OCI-LY7 (cell line): ENCODE measurements at regions of chr7 and their contacts with region 1.

Region 1: GRCh38 chr7:30322271-30323005 is 38.0 kb downstream of the ZNRF2 start:
- DNase-seq: peak; percentile 80
- H3K4me3 ChIP-seq: peak overlapping the region; percentile 63
- H3K27ac ChIP-seq: peak overlapping the region; percentile 78
- H3K4me1 ChIP-seq: peaks cover 40% of the 10 kb centered on the region
- CTCF ChIP-seq: 0 out of 2 replicates have a peak, but pooled peaks have one; percentile 31

Region 2: GRCh38 chr7:30173058-30173897 is 149.2 kb before region 1 on chr7:
- CTCF ChIA-PET with region 1: no interaction called
- POLR2A ChIA-PET with region 1: no interaction called
- intact Hi-C with region 1: no loop called
- DNase-seq: peak; percentile 21
- H3K4me3 ChIP-seq: no peak overlapping the region
- H3K27ac ChIP-seq: no peak overlapping the region
- H3K4me1 ChIP-seq: peaks cover 15% of the 10 kb centered on the region
- CTCF ChIP-seq: peak; percentile 38

Region 3: DNA sequence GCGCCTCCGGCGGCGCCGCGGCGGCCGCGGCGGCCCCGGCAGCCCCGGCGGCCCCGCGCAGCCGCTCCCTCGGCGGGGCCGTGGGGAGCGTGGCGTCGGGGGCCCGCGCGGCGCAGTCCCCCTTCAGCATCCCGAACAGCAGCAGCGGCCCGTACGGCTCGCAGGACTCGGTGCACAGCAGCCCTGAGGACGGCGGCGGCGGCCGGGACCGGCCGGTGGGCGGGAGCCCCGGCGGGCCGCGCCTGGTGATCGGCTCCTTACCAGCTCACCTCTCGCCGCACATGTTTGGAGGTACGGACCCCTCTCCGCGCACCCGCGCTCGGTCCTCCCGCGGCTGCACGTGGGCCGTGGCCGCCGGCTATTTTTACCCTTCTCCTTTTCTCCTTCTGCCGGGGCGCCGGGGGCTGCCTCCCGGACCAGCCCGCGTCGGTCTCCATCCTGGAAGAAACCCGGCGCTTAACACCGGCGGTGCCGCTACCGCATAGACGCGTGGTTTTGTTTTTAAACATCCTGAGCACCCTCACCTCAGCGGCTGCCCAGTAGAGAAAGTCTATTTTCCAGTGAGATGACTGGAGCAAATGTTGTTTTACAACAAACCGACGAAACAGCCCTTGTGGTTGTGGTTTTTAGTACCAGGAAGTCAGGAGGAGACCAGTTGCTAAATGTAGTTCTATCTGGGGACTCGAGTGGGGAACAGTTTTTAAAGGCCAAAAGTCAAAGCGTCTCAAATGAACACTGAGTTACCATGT is 36.7 kb before region 1 on chr7:
- CTCF ChIA-PET with region 1: no interaction called
- POLR2A ChIA-PET with region 1: interaction called, 3 read pairs
- intact Hi-C with region 1: loop called (anchors 2 kb)
- DNase-seq: peak; percentile 79
- H3K4me3 ChIP-seq: peak overlapping the region; percentile 81
- H3K27ac ChIP-seq: peak overlapping the region; percentile 85
- H3K4me1 ChIP-seq: peaks cover 56% of the 10 kb centered on the region
- CTCF ChIP-seq: no peak

Region 4: DNA sequence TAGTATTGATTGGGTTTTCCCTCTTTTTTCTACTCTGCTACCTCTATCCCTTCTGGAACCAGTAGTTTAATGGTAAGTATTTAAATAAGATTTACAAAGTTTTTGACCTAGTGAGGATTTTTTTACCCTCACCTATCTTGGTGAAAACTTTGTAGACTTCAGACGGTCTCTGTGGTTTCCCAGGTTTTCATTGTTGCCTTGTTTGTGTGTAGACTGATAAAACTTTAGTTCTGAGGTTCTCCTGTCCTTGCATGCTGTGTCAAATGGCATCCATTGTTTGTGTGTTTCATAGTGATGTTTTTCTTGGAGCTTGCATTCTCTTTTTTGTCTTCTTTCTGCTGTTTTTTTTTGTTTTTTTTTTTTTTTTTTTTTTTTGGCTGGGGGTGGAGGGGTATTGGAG is 15.5 kb before region 1 on chr7:
- CTCF ChIA-PET with region 1: interaction called, 4 read pairs
- POLR2A ChIA-PET with region 1: interaction called, 25 read pairs
- intact Hi-C with region 1: no loop called
- DNase-seq: no peak
- H3K4me3 ChIP-seq: no peak overlapping the region
- H3K27ac ChIP-seq: no peak overlapping the region
- H3K4me1 ChIP-seq: peaks cover 24% of the 10 kb centered on the region
- CTCF ChIP-seq: no peak

Region 5: DNA sequence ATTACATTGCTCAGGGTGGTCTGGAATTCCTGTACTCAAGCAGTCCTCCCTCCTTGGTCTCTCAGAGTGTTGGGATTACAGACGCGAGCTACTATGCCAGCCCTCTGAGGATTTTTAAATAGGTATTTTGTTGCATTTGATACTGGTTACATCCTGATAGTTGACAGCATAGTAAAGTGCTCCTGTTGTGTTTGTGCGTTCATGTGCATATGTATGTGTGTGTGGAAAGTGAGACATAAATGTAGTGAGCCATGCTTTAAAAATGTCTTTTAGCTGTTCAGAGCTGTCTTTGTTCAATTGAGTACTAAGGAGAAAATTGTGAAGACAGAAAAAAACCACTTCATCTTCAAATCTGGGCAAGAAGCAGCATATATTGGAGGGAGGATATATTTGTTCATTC is 10.3 kb before region 1 on chr7:
- CTCF ChIA-PET with region 1: interaction called, 4 read pairs
- POLR2A ChIA-PET with region 1: interaction called, 25 read pairs
- intact Hi-C with region 1: no loop called
- DNase-seq: no peak
- H3K4me3 ChIP-seq: no peak overlapping the region
- H3K27ac ChIP-seq: no peak overlapping the region
- H3K4me1 ChIP-seq: peaks cover 11% of the 10 kb centered on the region
- CTCF ChIP-seq: no peak

Region 6: GRCh38 chr7:30348083-30348560 is 25.7 kb after region 1 on chr7:
- CTCF ChIA-PET with region 1: no interaction called
- POLR2A ChIA-PET with region 1: interaction called, 21 read pairs
- intact Hi-C with region 1: loop called (anchors 2 kb)
- DNase-seq: peak; percentile 58
- H3K4me3 ChIP-seq: peak overlapping the region; percentile 31
- H3K27ac ChIP-seq: peak overlapping the region; percentile 31
- H3K4me1 ChIP-seq: peaks cover 66% of the 10 kb centered on the region
- CTCF ChIP-seq: no peak